MCF 10A (cell line): ENCODE measurements at regions of chr12 and their contacts with region 1.

Region 1: GRCh38 chr12:96416033-96416801 is 16.0 kb upstream of the CDK17 start:
- DNase-seq: peak; percentile 97
- H3K4me3 Mint-ChIP-seq: peak overlapping the region; percentile 57
- H3K27ac Mint-ChIP-seq: peak overlapping the region; percentile 87
- H3K4me1 Mint-ChIP-seq: peaks cover 14% of the 10 kb centered on the region
- H3K27me3 Mint-ChIP-seq: no peaks in the 10 kb centered on the region
- CTCF ChIP-seq: no peak

Region 2: DNA sequence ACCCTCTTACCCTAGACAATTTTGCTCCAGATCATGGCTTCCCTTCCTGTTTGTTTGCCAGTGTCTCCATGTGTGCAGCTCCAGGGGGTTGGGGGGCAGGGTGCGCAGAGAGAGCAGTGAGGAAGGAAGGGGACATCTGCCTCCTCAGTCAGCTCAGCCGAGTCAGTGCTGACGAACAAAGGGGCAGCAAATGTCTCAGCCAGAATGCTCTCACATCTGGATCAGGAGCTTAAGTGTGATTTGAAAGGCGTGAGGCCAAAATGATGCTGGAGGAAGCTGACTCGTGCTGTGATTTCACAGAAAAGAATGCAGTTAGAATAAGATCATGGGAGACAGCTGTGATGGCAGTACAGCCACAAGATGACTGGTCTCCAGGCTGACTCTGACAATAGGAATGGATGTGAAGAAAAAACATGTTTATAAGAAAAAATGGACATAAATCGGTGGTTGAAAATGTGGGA is 11.1 kb after region 1 on chr12:
- CTCF ChIA-PET with region 1: interaction called, 4 read pairs
- POLR2A ChIA-PET with region 1: interaction called, 23 read pairs
- intact Hi-C with region 1: no loop called
- DNase-seq: peak; percentile 97
- H3K4me3 Mint-ChIP-seq: peak overlapping the region; percentile 69
- H3K27ac Mint-ChIP-seq: peak overlapping the region; percentile 97
- H3K4me1 Mint-ChIP-seq: peaks cover 45% of the 10 kb centered on the region
- H3K27me3 Mint-ChIP-seq: no peaks in the 10 kb centered on the region
- CTCF ChIP-seq: no peak

Region 3: DNA sequence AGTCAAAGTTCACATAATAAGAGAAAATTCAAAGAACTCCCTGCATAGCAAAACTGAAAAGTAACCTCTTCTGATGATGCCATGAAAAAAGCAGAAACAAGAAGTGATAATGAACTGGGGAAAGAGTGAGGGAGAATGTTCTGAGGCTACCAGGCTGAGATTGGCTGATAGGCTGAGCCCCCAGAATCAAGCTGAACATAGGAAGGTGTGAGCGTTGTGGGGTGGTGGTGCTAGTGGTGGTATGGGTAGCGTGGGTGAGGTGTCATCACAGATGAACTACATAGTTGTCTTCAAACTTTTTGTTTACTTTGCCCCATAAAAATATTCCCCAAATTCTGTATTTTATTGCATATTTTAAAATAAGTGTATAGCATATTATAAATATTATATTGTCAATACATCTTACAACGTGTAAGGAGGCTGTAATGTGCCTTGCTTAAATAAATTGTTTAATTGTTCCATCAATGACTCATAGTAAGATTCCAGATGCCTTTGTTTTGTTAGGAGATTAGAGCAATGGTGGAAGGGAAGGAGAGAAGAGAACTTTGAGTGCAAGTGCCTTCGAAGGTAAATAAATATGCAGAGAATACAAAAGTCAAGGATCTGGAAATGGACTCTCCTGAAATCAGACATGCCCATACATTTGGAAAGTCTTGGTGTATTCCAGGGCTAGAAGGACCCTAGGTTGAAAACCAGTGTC is 57.3 kb after region 1 on chr12:
- CTCF ChIA-PET with region 1: no interaction called
- POLR2A ChIA-PET with region 1: no interaction called
- intact Hi-C with region 1: no loop called
- DNase-seq: no peak
- H3K4me3 Mint-ChIP-seq: no peak overlapping the region
- H3K27ac Mint-ChIP-seq: no peak overlapping the region
- H3K4me1 Mint-ChIP-seq: peaks cover 6% of the 10 kb centered on the region
- H3K27me3 Mint-ChIP-seq: no peaks in the 10 kb centered on the region
- CTCF ChIP-seq: no peak

Region 4: GRCh38 chr12:96489103-96490056 is 73.2 kb after region 1 on chr12 and contains the start of gene CFAP54:
- CTCF ChIA-PET with region 1: interaction called, 4 read pairs
- POLR2A ChIA-PET with region 1: interaction called, 5 read pairs
- intact Hi-C with region 1: loop called (anchors 1 kb)
- DNase-seq: peak; percentile 94
- H3K4me3 Mint-ChIP-seq: peak within 1 kb of the TSS; percentile 85
- H3K27ac Mint-ChIP-seq: peak within 1 kb of the TSS; percentile 98
- H3K4me1 Mint-ChIP-seq: peaks cover 18% of the 10 kb centered on the region
- H3K27me3 Mint-ChIP-seq: no peaks in the 10 kb centered on the region
- CTCF ChIP-seq: peak; percentile 85
- total RNA-seq, gene CFAP54: 0.56 and 1.1 TPM in 2 replicates